CD14-positive monocyte (primary cell): ENCODE measurements at regions of chr6 and their contacts with region 1.

Region 1: GRCh38 chr6:32971581-32972352 is 3.4 kb downstream of the BRD2 start:
- DNase-seq: peak; percentile 100
- H3K4me3 ChIP-seq: peak overlapping the region; percentile 93 to 96 (median 93)
- H3K4me3 Mint-ChIP-seq: peak overlapping the region; percentile 98 to 100
- H3K27ac ChIP-seq: peak overlapping the region; percentile 95 to 97
- H3K27ac Mint-ChIP-seq: peak overlapping the region; percentile 97 to 100 (median 99)
- H3K4me1 ChIP-seq: peaks cover 43 to 45% of the 10 kb centered on the region in 2 donors
- H3K4me1 Mint-ChIP-seq: peaks cover 48% of the 10 kb centered on the region
- H3K27me3 ChIP-seq: no peaks in the 10 kb centered on the region
- H3K27me3 Mint-ChIP-seq: peaks cover 0 to 10% (median 2%) of the 10 kb centered on the region in 3 donors
- CTCF ChIP-seq: no peak

Region 2: GRCh38 chr6:32843979-32844838 is 127.6 kb before region 1 on chr6 and contains the start of gene PSMB8:
- intact Hi-C with region 1: loop called in 1 of 2 experiments (anchors 5 kb)
- DNase-seq: peak; percentile 96
- H3K4me3 ChIP-seq: peak within 1 kb of the TSS; percentile 65 to 87 (median 83)
- H3K4me3 Mint-ChIP-seq: peak within 1 kb of the TSS; percentile 98 to 99
- H3K27ac ChIP-seq: peak within 1 kb of the TSS; percentile 89 to 94
- H3K27ac Mint-ChIP-seq: peak within 1 kb of the TSS; percentile 99 to 100 (median 100)
- H3K4me1 ChIP-seq: peaks cover 49 to 74% of the 10 kb centered on the region in 2 donors
- H3K4me1 Mint-ChIP-seq: peaks cover 77% of the 10 kb centered on the region
- H3K27me3 ChIP-seq: no peaks in the 10 kb centered on the region
- H3K27me3 Mint-ChIP-seq: peaks cover 0 to 6% (median 0%) of the 10 kb centered on the region in 3 donors
- CTCF ChIP-seq: no peak
- polyA plus RNA-seq, gene PSMB8: 164 to 534 (median 487) TPM

Region 3: DNA sequence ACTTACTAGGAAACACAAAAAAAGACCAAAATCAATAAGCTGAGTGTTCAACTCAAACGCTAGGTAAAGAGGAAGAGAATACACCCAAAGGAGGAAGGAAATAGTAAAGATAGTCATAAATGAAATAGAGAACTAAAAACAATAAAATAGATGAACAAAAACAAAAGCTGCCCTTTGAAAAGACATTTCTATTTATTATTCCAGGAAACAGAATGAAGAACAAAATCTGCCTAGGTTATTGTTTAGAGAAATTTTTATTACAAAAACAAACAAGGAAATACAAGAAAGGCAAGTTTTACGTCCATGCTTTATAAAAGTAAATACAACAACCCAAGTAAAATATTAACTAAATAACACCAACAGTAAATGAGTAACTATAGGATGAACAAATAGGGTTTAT is 51.1 kb before region 1 on chr6:
- intact Hi-C with region 1: no loop called
- DNase-seq: peak in 2 of 3 donors; percentile 28 to 42
- H3K4me3 ChIP-seq: peak overlapping the region in 1 of 3 experiments; percentile 25
- H3K4me3 Mint-ChIP-seq: peak overlapping the region in 1 of 2 donors; percentile 64
- H3K27ac ChIP-seq: peak overlapping the region in 1 of 2 donors; percentile 49
- H3K27ac Mint-ChIP-seq: peak overlapping the region in 5 of 7 donors; percentile 0 to 59 (median 41)
- H3K4me1 ChIP-seq: peaks cover 12 to 32% of the 10 kb centered on the region in 2 donors
- H3K4me1 Mint-ChIP-seq: peaks cover 44% of the 10 kb centered on the region
- H3K27me3 ChIP-seq: no peaks in the 10 kb centered on the region
- H3K27me3 Mint-ChIP-seq: peaks cover 0 to 1% (median 0%) of the 10 kb centered on the region in 3 donors
- CTCF ChIP-seq: no peak

Region 4: GRCh38 chr6:32933636-32934085 is 38.1 kb before region 1 on chr6:
- intact Hi-C with region 1: loop called (anchors 5 kb)
- DNase-seq: peak; percentile 58 to 78 (median 76)
- H3K4me3 ChIP-seq: no peak overlapping the region
- H3K4me3 Mint-ChIP-seq: no peak overlapping the region
- H3K27ac ChIP-seq: peak overlapping the region in 1 of 2 donors; percentile 5
- H3K27ac Mint-ChIP-seq: peak overlapping the region in 5 of 7 donors; percentile 22 to 79 (median 37)
- H3K4me1 ChIP-seq: peaks cover 61 to 68% of the 10 kb centered on the region in 2 donors
- H3K4me1 Mint-ChIP-seq: peaks cover 75% of the 10 kb centered on the region
- H3K27me3 ChIP-seq: no peaks in the 10 kb centered on the region
- H3K27me3 Mint-ChIP-seq: peaks cover 0 to 1% (median 1%) of the 10 kb centered on the region in 3 donors
- CTCF ChIP-seq: peak; percentile 88

Region 5: DNA sequence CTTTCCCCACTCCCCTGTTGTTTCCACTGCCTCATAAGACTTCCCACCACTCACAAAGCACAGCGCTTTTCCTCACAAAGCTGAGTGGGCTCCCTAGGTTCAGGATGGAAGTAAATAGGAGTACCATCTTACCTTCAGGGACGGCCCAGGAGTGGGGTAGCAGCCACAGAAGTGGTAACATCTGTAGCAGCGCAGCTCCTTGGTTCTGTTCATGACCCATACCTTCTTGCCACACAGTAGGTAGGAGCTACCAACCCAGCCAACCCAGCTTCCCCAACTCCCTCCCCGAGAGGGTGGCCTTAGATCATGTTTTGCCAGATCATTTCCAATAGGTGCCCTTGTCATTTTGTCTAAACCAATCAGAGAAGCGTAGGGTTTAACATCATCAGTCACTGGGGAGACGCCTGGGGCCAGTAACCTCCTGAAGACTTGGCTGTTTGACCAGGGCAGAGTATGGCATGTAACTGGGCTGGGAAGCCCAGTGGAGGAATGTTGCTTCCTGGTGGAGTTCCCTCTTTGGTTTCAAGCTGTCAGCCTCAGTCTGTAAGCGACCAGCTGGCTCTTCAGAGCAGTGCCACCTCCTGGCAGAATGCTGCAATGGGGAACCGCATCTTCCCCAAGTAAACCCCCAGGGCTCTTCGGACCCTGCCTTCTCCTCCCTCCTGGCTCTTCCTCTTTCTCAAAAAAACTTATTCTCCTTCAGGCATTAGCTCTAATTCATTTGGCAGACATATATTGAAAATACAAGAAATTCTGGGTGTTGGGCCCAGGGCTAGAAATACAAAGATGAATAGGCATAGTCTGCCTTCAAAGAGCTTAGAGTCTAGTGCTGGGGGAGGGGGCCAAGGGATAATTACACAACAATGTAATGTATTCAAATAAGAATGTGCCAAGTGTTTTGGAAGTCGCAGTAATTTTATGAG is 18.7 kb before region 1 on chr6 and contains the start of gene HLA-DMA:
- intact Hi-C with region 1: loop called in 1 of 2 experiments (anchors 2 kb)
- DNase-seq: peak; percentile 98 to 99 (median 99)
- H3K4me3 ChIP-seq: peak within 1 kb of the TSS; percentile 84 to 95 (median 92)
- H3K4me3 Mint-ChIP-seq: peak within 1 kb of the TSS; percentile 93 to 96
- H3K27ac ChIP-seq: peak within 1 kb of the TSS; percentile 74 to 86
- H3K27ac Mint-ChIP-seq: peak within 1 kb of the TSS; percentile 94 to 98 (median 97)
- H3K4me1 ChIP-seq: peaks cover 62 to 64% of the 10 kb centered on the region in 2 donors
- H3K4me1 Mint-ChIP-seq: peaks cover 70% of the 10 kb centered on the region
- H3K27me3 ChIP-seq: no peaks in the 10 kb centered on the region
- H3K27me3 Mint-ChIP-seq: peaks cover 0 to 2% (median 0%) of the 10 kb centered on the region in 3 donors
- CTCF ChIP-seq: peak; percentile 88
- polyA plus RNA-seq, gene HLA-DMA: 434 to 526 (median 515) TPM

Region 6: GRCh38 chr6:32984605-32985389 is 13.0 kb after region 1 on chr6:
- intact Hi-C with region 1: loop called in 1 of 2 experiments (anchors 1 kb)
- DNase-seq: peak; percentile 79 to 84 (median 84)
- H3K4me3 ChIP-seq: no peak overlapping the region
- H3K4me3 Mint-ChIP-seq: no peak overlapping the region
- H3K27ac ChIP-seq: peak overlapping the region in 1 of 2 donors; percentile 20
- H3K27ac Mint-ChIP-seq: peak overlapping the region in 3 of 7 donors; percentile 7 to 69 (median 43)
- H3K4me1 ChIP-seq: no peaks in the 10 kb centered on the region
- H3K4me1 Mint-ChIP-seq: peaks cover 24% of the 10 kb centered on the region
- H3K27me3 ChIP-seq: no peaks in the 10 kb centered on the region
- H3K27me3 Mint-ChIP-seq: peaks cover 0 to 4% (median 0%) of the 10 kb centered on the region in 3 donors
- CTCF ChIP-seq: peak; percentile 96